ENCODE measurements at regions of chr12 and their contacts with region 1.

Region 1: DNA sequence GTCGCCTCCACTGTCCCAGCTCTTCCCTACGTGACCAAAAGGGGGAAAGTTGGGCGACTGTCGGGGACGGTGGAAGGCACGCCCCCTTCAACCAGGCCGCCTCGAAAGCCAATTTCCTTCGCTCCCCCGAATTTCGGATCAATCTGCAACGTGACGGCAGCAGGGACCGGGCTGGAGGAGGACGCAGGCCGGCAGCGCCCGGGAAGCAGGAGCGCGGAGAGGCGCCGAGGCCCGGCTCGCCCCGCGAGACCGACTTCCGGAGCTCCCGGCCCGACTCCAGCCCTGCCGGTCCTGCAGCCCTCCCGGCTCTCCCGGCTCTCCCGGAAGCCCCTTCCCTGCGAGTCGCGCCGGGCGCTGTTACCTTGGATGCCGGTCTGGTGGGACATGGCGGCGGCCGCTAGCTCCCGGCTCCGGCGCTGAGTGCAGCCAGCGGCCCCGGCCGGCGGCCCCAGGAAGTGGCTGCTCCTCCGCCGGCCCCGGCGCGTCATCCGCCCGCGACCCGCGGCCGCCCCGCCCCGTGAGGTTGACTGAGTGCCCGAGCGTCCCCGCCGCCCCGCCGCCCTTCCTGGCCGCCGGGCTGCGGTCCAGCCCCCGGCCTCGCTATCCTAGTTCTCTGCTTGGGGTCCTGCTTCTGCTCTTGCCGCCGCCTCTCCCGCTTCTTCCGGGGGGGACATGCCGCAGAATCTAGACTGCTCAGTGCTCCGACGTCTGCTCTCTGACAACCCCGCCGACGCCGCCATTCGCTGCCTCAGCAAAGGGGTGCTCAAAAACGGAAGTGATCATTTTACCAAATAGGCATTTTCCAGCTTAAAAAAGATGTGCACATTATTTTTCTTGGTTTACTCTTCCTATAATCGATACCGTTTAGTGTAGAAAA is at the start of gene TWF1:
- DNase-seq: peak; percentile 95
- total RNA-seq, gene TWF1: 16.5 TPM

Region 2: GRCh38 chr12:43306066-43306465 is 500.0 kb before region 1 on chr12:
- intact Hi-C with region 1: no loop called
- DNase-seq: no peak

Region 3: DNA sequence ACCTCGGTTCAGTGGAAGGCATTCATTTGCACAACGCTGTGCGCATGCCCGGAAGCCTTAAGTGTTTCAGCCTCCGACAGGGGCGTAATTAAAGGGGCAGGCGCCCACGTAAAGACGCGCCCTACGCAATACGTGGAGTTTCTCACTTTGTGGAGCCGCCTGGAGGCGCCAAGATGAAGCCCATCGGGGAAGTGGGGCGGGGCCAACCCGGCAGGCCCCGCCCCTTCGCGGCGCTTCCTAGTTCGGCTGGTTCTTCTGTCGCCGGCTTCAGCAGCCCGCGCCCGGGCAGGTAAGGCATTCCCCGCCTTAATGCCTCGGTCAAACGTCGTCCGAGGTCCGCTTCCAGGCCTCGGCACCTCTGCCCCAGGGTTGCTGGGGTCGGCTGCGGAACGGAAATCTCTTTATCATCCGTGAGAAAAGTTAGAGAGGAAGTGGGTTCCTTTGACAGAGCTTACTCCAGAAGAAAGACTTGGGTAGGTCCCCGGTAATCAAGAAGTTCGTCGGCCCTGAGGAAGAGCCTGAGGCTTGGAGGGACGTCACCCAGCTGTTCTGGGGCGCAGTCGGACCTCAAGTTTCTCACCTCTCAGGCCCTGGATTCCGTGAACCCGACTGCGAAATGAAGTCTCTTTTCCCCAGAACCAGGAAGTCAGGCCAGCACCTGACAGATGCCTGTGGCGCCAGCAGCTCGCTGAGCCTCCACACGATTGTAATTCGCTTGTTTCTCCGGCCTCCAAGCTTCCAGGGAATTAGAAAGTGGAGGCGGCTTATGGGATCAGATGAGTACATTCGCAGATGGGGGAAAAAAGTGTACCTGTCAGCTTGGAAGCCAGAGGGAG is 47.2 kb before region 1 on chr12 and contains the starts of genes IRAK4 and PUS7L:
- intact Hi-C with region 1: loop called (anchors 2 kb)
- DNase-seq: peak; percentile 98
- total RNA-seq, gene IRAK4: 7.8 TPM
- total RNA-seq, gene PUS7L: 5.9 TPM

Region 4: GRCh38 chr12:43835656-43836474 is 29.8 kb after region 1 on chr12 and contains the start of gene TMEM117:
- intact Hi-C with region 1: loop called (anchors 1 kb)
- DNase-seq: peak; percentile 88
- total RNA-seq, gene TMEM117: 7.5 TPM